CD4-positive, alpha-beta T cell (primary cell): ENCODE measurements at regions of chr15 and their contacts with region 1.

Region 1: GRCh38 chr15:94324117-94324826 is 92.9 kb downstream of the MCTP2 start:
- DNase-seq: peak in 13 of 14 experiments; percentile 19 to 81 (median 36)
- ATAC-seq: peak; percentile 72
- H3K4me3 ChIP-seq: no peak overlapping the region
- H3K4me3 Mint-ChIP-seq: no peak overlapping the region
- H3K27ac ChIP-seq: no peak overlapping the region
- H3K27ac Mint-ChIP-seq: no peak overlapping the region
- H3K4me1 ChIP-seq: peaks cover 3% of the 10 kb centered on the region
- H3K4me1 Mint-ChIP-seq: peaks cover 6% of the 10 kb centered on the region
- H3K27me3 ChIP-seq: no peaks in the 10 kb centered on the region
- H3K27me3 Mint-ChIP-seq: no peaks in the 10 kb centered on the region
- CTCF ChIP-seq: peak; percentile 91

Region 2: DNA sequence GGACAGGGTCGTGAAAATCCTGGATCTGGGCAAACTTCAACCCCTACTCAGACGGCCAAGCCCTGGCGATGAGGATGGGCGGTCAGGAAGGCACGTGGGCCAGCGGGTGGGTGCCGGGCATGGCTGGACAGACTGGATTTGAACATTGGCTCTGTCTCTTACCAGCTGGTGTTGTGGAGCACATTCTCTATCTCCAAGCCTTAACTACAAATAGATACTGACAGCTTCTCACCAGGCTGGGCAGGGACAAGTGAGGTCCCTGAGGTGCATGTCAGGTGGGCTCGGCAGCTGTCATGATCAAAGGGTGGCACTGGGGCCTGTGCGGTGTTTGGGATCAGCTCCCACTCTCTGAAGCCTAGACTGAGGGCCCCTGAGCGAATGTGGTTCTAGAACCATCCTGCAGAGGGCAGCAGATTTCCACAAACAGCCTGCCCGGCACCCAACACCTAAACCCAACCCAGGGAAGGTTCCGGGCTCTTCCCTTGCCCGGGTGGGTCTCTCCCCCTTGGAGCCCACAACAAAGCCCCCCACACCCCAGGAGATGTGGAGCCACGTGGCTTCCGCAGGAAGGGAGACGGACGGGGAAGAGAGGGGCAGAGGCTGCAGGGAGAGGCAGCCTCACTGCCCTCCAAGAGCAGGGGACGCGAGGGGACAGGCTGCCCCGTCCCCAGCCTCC is 1293.7 kb before region 1 on chr15:
- CTCF ChIA-PET with region 1: interaction called, 8 read pairs
- POLR2A ChIA-PET with region 1: no interaction called
- intact Hi-C with region 1: loop called (anchors 2 to 5 kb)
- DNase-seq: peak; percentile 48 to 83 (median 58)
- ATAC-seq: peak; percentile 86
- H3K4me3 ChIP-seq: no peak overlapping the region
- H3K4me3 Mint-ChIP-seq: no peak overlapping the region
- H3K27ac ChIP-seq: no peak overlapping the region
- H3K27ac Mint-ChIP-seq: peak overlapping the region; percentile 80
- H3K4me1 ChIP-seq: peaks cover 28% of the 10 kb centered on the region
- H3K4me1 Mint-ChIP-seq: peaks cover 27% of the 10 kb centered on the region
- H3K27me3 ChIP-seq: no peaks in the 10 kb centered on the region
- H3K27me3 Mint-ChIP-seq: no peaks in the 10 kb centered on the region
- CTCF ChIP-seq: peak; percentile 78

Region 3: DNA sequence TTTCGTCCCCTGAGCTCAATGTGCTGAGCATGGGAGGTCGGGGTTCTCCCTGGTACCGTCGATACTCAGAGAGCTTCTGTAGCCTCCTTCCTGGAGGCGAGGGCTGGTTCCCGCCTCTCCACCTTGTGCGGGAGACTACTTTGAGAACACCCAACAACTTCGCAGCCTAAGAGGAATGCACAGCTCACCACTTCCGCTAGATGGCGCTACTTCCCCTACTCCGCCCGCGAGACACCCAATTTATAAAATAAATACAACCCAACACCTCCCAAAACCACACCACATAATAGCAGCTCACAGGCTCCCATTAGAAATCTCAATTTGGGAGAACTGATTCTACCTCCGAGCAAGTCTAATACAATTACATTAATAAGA is 1236.5 kb before region 1 on chr15:
- CTCF ChIA-PET with region 1: no interaction called
- POLR2A ChIA-PET with region 1: no interaction called
- intact Hi-C with region 1: loop called in 1 of 2 experiments (anchors 2 kb)
- DNase-seq: peak; percentile 43 to 84 (median 56)
- ATAC-seq: peak; percentile 78
- H3K4me3 ChIP-seq: peak overlapping the region; percentile 22
- H3K4me3 Mint-ChIP-seq: peak overlapping the region; percentile 87
- H3K27ac ChIP-seq: no peak overlapping the region
- H3K27ac Mint-ChIP-seq: no peak overlapping the region
- H3K4me1 ChIP-seq: peaks cover 18% of the 10 kb centered on the region
- H3K4me1 Mint-ChIP-seq: peaks cover 18% of the 10 kb centered on the region
- H3K27me3 ChIP-seq: peaks cover 36 to 70% of the 10 kb centered on the region in 2 experiments
- H3K27me3 Mint-ChIP-seq: peaks cover 80% of the 10 kb centered on the region
- CTCF ChIP-seq: peak; percentile 79

Region 4: GRCh38 chr15:93997084-93997918 is 327.0 kb before region 1 on chr15:
- CTCF ChIA-PET with region 1: no interaction called
- POLR2A ChIA-PET with region 1: no interaction called
- intact Hi-C with region 1: loop called in 1 of 2 experiments (anchors 10 kb)
- DNase-seq: peak in 2 of 14 experiments; percentile 1 to 8
- ATAC-seq: no peak
- H3K4me3 ChIP-seq: no peak overlapping the region
- H3K4me3 Mint-ChIP-seq: no peak overlapping the region
- H3K27ac ChIP-seq: no peak overlapping the region
- H3K27ac Mint-ChIP-seq: no peak overlapping the region
- H3K4me1 ChIP-seq: no peaks in the 10 kb centered on the region
- H3K4me1 Mint-ChIP-seq: no peaks in the 10 kb centered on the region
- H3K27me3 ChIP-seq: no peaks in the 10 kb centered on the region
- H3K27me3 Mint-ChIP-seq: no peaks in the 10 kb centered on the region
- CTCF ChIP-seq: peak; percentile 64

Region 5: DNA sequence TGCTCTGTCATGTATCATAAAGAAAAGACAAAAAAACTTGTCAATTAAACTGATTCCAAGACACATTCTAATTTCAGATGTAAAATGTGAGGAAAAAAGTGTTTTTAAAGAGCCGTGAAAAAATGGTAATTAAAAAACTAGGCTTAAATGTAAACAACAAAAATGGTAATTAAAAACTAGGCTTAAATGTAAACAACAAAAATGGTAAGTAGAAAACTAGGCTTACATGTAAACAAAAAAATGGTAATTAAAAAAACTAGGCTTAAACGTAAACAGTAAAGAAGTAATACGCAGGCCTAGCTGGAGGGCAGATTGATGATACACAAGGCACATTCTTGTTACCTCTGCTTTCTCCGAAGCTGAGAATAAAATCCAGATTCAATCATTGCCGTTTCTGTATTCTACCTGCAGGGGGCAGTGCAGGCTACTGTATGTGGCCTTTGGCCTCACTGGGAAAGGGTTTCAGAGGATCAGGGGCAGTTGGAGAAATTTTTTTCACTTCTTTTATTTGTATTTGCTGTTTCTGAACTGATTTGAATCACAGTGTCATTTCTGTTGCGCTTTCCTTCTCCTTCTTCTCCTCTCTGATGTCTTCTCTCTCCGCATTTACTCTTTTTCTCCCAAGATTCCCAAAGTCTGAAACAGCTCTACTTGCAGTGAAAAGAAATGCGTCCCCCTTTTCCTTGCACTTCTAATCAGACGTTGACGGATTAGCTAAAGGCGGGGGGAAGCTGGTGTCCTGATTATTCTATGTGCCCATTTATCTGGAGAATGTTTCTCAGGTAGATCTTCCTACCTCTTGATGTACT is 160.1 kb before region 1 on chr15:
- CTCF ChIA-PET with region 1: interaction called, 52 read pairs
- POLR2A ChIA-PET with region 1: interaction called, 3 read pairs
- intact Hi-C with region 1: loop called (anchors 1 kb)
- DNase-seq: peak in 13 of 14 experiments; percentile 6 to 73 (median 38)
- ATAC-seq: no peak
- H3K4me3 ChIP-seq: no peak overlapping the region
- H3K4me3 Mint-ChIP-seq: no peak overlapping the region
- H3K27ac ChIP-seq: no peak overlapping the region
- H3K27ac Mint-ChIP-seq: no peak overlapping the region
- H3K4me1 ChIP-seq: no peaks in the 10 kb centered on the region
- H3K4me1 Mint-ChIP-seq: no peaks in the 10 kb centered on the region
- H3K27me3 ChIP-seq: no peaks in the 10 kb centered on the region
- H3K27me3 Mint-ChIP-seq: no peaks in the 10 kb centered on the region
- CTCF ChIP-seq: peak; percentile 76

Region 6: GRCh38 chr15:94230956-94231722 is 93.1 kb before region 1 on chr15 and contains the start of gene MCTP2:
- CTCF ChIA-PET with region 1: interaction called, 6 read pairs
- POLR2A ChIA-PET with region 1: interaction called, 3 read pairs
- intact Hi-C with region 1: loop called in 1 of 2 experiments (anchors 10 kb)
- DNase-seq: peak; percentile 59 to 92 (median 78)
- ATAC-seq: peak; percentile 83
- H3K4me3 ChIP-seq: peak within 1 kb of the TSS; percentile 75
- H3K4me3 Mint-ChIP-seq: peak within 1 kb of the TSS; percentile 96
- H3K27ac ChIP-seq: peak within 1 kb of the TSS; percentile 53 to 89
- H3K27ac Mint-ChIP-seq: peak within 1 kb of the TSS; percentile 90
- H3K4me1 ChIP-seq: peaks cover 27% of the 10 kb centered on the region
- H3K4me1 Mint-ChIP-seq: peaks cover 45% of the 10 kb centered on the region
- H3K27me3 ChIP-seq: no peaks in the 10 kb centered on the region
- H3K27me3 Mint-ChIP-seq: no peaks in the 10 kb centered on the region
- CTCF ChIP-seq: no peak
- total RNA-seq, gene MCTP2: 8.0 to 10.8 TPM

Region 7: GRCh38 chr15:94277485-94277884 is 46.8 kb before region 1 on chr15:
- CTCF ChIA-PET with region 1: no interaction called
- POLR2A ChIA-PET with region 1: no interaction called
- intact Hi-C with region 1: no loop called
- DNase-seq: no peak
- ATAC-seq: no peak
- H3K4me3 ChIP-seq: no peak overlapping the region
- H3K4me3 Mint-ChIP-seq: no peak overlapping the region
- H3K27ac ChIP-seq: no peak overlapping the region
- H3K27ac Mint-ChIP-seq: no peak overlapping the region
- H3K4me1 ChIP-seq: no peaks in the 10 kb centered on the region
- H3K4me1 Mint-ChIP-seq: no peaks in the 10 kb centered on the region
- H3K27me3 ChIP-seq: no peaks in the 10 kb centered on the region
- H3K27me3 Mint-ChIP-seq: no peaks in the 10 kb centered on the region
- CTCF ChIP-seq: no peak

Region 8: DNA sequence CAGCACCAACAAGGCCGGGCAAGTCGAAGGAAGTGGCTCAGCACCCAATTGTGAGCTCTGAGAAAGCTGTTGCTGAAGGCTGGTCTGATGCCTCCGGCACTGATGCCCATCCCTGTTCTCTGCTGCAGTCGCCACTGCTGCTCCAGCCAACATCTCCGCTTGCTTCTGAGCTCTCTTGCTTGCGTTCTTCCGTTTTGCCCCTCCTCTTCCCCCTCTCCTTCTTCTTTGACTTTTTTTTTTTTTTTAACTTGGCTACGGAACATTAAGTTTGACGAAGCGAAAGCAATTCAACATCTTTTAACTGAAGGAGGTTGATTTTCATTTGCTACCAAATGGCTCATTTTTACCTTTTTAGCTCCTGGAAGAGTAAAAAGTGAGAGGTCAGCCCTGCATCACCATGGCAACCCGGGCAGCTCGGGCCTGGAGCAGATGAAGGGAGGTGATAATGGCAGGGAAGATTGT is 350.1 kb after region 1 on chr15:
- CTCF ChIA-PET with region 1: no interaction called
- POLR2A ChIA-PET with region 1: no interaction called
- intact Hi-C with region 1: no loop called
- DNase-seq: no peak
- ATAC-seq: no peak
- H3K4me3 ChIP-seq: no peak overlapping the region
- H3K4me3 Mint-ChIP-seq: no peak overlapping the region
- H3K27ac ChIP-seq: no peak overlapping the region
- H3K27ac Mint-ChIP-seq: no peak overlapping the region
- H3K4me1 ChIP-seq: no peaks in the 10 kb centered on the region
- H3K4me1 Mint-ChIP-seq: no peaks in the 10 kb centered on the region
- H3K27me3 ChIP-seq: no peaks in the 10 kb centered on the region
- H3K27me3 Mint-ChIP-seq: peaks cover 32% of the 10 kb centered on the region
- CTCF ChIP-seq: no peak